CD8-positive, alpha-beta memory T cell (primary cell): ENCODE measurements at regions of chr22 and their contacts with region 1.

Region 1: DNA sequence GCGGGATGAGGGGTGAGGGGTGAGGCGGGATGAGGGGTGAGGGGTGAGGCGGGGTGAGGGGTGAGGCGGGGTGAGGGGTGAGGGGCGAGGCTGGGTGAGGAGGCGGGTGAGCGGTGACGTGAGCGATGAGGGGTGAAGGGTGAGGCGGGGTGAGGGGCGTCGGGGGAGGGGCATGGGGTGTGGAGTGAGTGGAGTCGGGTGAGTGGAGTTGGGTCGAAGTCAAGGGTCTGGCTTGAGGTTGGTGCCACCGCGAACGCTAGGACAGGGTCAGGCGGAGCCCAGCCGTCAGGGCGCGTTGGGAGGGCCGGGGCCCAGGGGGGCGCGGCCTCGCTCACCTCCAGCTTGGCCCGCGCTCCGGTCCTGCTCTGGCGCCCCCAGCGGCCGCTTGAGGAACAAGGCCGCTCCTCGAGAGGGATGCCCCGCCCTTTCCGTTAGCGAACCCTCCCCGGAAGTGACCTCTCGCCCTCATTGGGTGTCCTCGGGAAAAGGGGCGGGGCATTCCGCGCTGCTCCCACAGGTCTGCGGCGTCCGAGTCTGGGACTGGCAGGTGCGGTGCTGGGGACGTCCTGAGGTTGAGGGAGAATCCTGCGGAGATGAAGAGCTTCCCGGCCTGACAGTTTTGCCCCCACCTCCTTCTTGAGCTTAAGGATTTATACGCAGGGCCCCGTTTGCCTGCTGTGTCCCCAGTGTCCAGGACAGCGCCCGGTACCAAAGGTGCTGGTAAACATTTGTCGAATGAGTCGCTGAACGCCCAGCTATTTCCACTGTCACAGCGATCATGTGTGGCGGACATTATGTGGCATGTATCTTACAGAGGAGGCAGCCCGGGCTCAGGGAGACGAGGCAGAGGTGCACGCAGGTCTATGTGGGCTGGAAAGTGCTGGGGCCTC is at the start of gene SYCE3:
- DNase-seq: peak; percentile 95 to 98 (median 97)
- H3K4me3 ChIP-seq: peak within 1 kb of the TSS; percentile 85
- H3K4me3 Mint-ChIP-seq: peak within 1 kb of the TSS; percentile 81 to 98 (median 92)
- H3K27ac ChIP-seq: peak within 1 kb of the TSS; percentile 29
- H3K27ac Mint-ChIP-seq: peak within 1 kb of the TSS; percentile 74 to 98 (median 90)
- H3K4me1 ChIP-seq: no peaks in the 10 kb centered on the region
- H3K4me1 Mint-ChIP-seq: peaks cover 18 to 21% (median 19%) of the 10 kb centered on the region in 3 donors
- H3K27me3 ChIP-seq: no peaks in the 10 kb centered on the region
- H3K27me3 Mint-ChIP-seq: peaks cover 0 to 4% of the 10 kb centered on the region in 2 donors
- total RNA-seq, gene SYCE3: not detected

Region 2: GRCh38 chr22:50532824-50533796 is 29.7 kb before region 1 on chr22:
- CTCF ChIA-PET with region 1: interaction called, 14 read pairs
- POLR2A ChIA-PET with region 1: interaction called, 6 read pairs
- DNase-seq: peak in 1 of 5 donors; percentile 29
- H3K4me3 ChIP-seq: no peak overlapping the region
- H3K4me3 Mint-ChIP-seq: peak overlapping the region in 6 of 7 donors; percentile 34 to 77 (median 68)
- H3K27ac ChIP-seq: peak overlapping the region; percentile 16
- H3K27ac Mint-ChIP-seq: peak overlapping the region; percentile 75 to 99 (median 88)
- H3K4me1 ChIP-seq: peaks cover 13% of the 10 kb centered on the region
- H3K4me1 Mint-ChIP-seq: peaks cover 13 to 23% (median 19%) of the 10 kb centered on the region in 3 donors
- H3K27me3 ChIP-seq: no peaks in the 10 kb centered on the region
- H3K27me3 Mint-ChIP-seq: peaks cover 0 to 2% of the 10 kb centered on the region in 2 donors

Region 3: DNA sequence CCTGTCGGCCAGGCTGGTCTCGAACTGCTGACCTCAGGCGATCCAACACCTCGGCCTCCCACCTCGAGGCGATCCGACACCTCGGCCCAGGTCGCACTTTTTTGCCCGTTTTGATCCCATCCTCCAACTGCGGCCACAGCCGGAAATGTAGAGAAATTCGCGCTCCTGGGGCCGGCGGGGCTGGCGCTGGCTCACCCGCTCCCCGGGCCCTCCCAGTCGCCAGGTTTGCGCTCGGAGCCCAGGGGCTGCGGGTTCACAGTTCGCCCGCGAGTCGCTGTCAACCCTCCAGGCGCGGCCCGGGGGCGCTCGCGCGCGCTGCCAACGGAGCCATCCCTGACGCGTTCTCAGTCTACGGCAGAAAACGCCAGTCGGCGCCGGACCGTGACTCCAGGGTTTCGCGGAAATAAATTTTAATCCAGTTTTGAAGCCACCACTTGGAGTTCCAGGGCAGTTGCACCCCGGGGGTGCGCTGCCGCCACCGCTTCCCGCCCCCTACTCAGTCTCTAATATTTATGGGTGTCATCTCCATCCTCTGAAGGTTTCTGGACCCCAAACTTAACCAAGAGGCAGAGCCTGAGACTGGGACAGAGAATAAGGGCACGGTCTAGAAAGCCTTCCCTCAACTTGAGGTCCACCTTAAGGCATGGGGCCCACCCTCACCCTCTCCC is 18.6 kb before region 1 on chr22:
- CTCF ChIA-PET with region 1: interaction called, 18 read pairs
- POLR2A ChIA-PET with region 1: interaction called, 6 read pairs
- DNase-seq: peak; percentile 72 to 87 (median 78)
- H3K4me3 ChIP-seq: peak overlapping the region; percentile 77
- H3K4me3 Mint-ChIP-seq: peak overlapping the region; percentile 60 to 85 (median 71)
- H3K27ac ChIP-seq: peak overlapping the region; percentile 33
- H3K27ac Mint-ChIP-seq: peak overlapping the region; percentile 74 to 99 (median 91)
- H3K4me1 ChIP-seq: peaks cover 41% of the 10 kb centered on the region
- H3K4me1 Mint-ChIP-seq: peaks cover 39 to 55% (median 44%) of the 10 kb centered on the region in 3 donors
- H3K27me3 ChIP-seq: no peaks in the 10 kb centered on the region
- H3K27me3 Mint-ChIP-seq: no peaks in the 10 kb centered on the region

Region 4: GRCh38 chr22:50582562-50583293 is 20.0 kb after region 1 on chr22 and contains the start of gene CHKB:
- CTCF ChIA-PET with region 1: interaction called, 18 read pairs
- POLR2A ChIA-PET with region 1: no interaction called
- DNase-seq: peak; percentile 97 to 99 (median 98)
- H3K4me3 ChIP-seq: peak within 1 kb of the TSS; percentile 89
- H3K4me3 Mint-ChIP-seq: peak within 1 kb of the TSS; percentile 88 to 98 (median 94)
- H3K27ac ChIP-seq: peak within 1 kb of the TSS; percentile 94
- H3K27ac Mint-ChIP-seq: peak within 1 kb of the TSS; percentile 88 to 99 (median 96)
- H3K4me1 ChIP-seq: peaks cover 19% of the 10 kb centered on the region
- H3K4me1 Mint-ChIP-seq: peaks cover 11 to 32% (median 17%) of the 10 kb centered on the region in 3 donors
- H3K27me3 ChIP-seq: no peaks in the 10 kb centered on the region
- H3K27me3 Mint-ChIP-seq: no peaks in the 10 kb centered on the region
- total RNA-seq, gene CHKB: 72.1 to 76.1 TPM

Region 5: GRCh38 chr22:50657925-50658324 is 95.2 kb after region 1 on chr22:
- CTCF ChIA-PET with region 1: no interaction called
- POLR2A ChIA-PET with region 1: no interaction called
- DNase-seq: no peak
- H3K4me3 ChIP-seq: no peak overlapping the region
- H3K4me3 Mint-ChIP-seq: no peak overlapping the region
- H3K27ac ChIP-seq: no peak overlapping the region
- H3K27ac Mint-ChIP-seq: no peak overlapping the region
- H3K4me1 ChIP-seq: no peaks in the 10 kb centered on the region
- H3K4me1 Mint-ChIP-seq: no peaks in the 10 kb centered on the region
- H3K27me3 ChIP-seq: no peaks in the 10 kb centered on the region
- H3K27me3 Mint-ChIP-seq: peaks cover 12 to 35% of the 10 kb centered on the region in 2 donors